ENCODE measurements at regions of chr6 and their contacts with region 1.

Region 1: DNA sequence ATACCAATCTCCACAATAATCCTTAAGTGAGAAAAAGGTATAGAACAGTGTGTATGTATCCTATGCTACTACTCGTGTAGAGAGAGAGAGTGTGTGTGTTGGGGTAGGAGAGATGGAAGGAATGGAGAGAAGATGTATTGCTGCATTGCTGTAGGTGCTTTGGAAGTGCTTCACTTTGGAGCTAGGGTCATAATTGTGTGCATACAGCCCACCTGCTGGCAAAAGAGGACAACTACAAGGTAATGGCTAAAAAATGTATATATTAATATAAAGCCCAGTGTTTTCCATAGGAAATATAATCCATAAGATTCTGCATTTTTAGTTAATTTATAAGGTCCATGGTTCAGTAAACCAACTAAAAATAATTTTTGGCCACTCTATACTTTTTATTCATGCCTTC is 36.1 kb downstream of the SERAC1 start:
- DNase-seq: no peak
- ATAC-seq: peak; percentile 85
- H3K4me3 ChIP-seq: no peak overlapping the region
- H3K27ac ChIP-seq: no peak overlapping the region
- H3K4me1 ChIP-seq: no peaks in the 10 kb centered on the region
- H3K27me3 ChIP-seq: no peaks in the 10 kb centered on the region
- CTCF ChIP-seq: peak; percentile 41 to 63 (median 60); a peak in 5 of 6 replicates
- POLR2A ChIP-seq: no peak
- RAD21 ChIP-seq: peak; percentile 64

Region 2: GRCh38 chr6:157756708-157757429 is 375.1 kb before region 1 on chr6:
- CTCF ChIA-PET with region 1: interaction called, 6 read pairs
- POLR2A ChIA-PET with region 1: no interaction called
- RAD21 ChIA-PET with region 1: no interaction called
- intact Hi-C with region 1: loop called (anchors 5 kb)
- DNase-seq: peak; percentile 71
- ATAC-seq: peak; percentile 89
- H3K4me3 ChIP-seq: peak overlapping the region in 1 of 2 experiments; percentile 18; a peak in 1 of 4 replicates
- H3K27ac ChIP-seq: no peak overlapping the region
- H3K4me1 ChIP-seq: peaks cover 17 to 49% of the 10 kb centered on the region in 2 experiments
- H3K27me3 ChIP-seq: no peaks in the 10 kb centered on the region
- CTCF ChIP-seq: peak in 2 of 3 experiments; percentile 79 to 88; a peak in 4 of 6 replicates
- POLR2A ChIP-seq: no peak
- RAD21 ChIP-seq: no peak

Measured in HCT116 (cell line).